Calu3 (cell line): ENCODE measurements at regions of chr7 and their contacts with region 1.

Region 1: GRCh38 chr7:137592232-137592896 is 248.8 kb upstream of the PTN start:
- DNase-seq: peak; percentile 71
- H3K4me3 Mint-ChIP-seq: no peak overlapping the region
- H3K27ac Mint-ChIP-seq: no peak overlapping the region
- H3K4me1 Mint-ChIP-seq: no peaks in the 10 kb centered on the region
- H3K27me3 Mint-ChIP-seq: no peaks in the 10 kb centered on the region
- CTCF ChIP-seq: peak; percentile 79

Region 2: GRCh38 chr7:135801045-135801693 is 1791.2 kb before region 1 on chr7:
- CTCF ChIA-PET with region 1: no interaction called
- intact Hi-C with region 1: loop called (anchors 10 kb)
- DNase-seq: peak; percentile 42
- H3K4me3 Mint-ChIP-seq: no peak overlapping the region
- H3K27ac Mint-ChIP-seq: no peak overlapping the region
- H3K4me1 Mint-ChIP-seq: peaks cover 20% of the 10 kb centered on the region
- H3K27me3 Mint-ChIP-seq: peaks cover 45% of the 10 kb centered on the region
- CTCF ChIP-seq: peak; percentile 51

Region 3: DNA sequence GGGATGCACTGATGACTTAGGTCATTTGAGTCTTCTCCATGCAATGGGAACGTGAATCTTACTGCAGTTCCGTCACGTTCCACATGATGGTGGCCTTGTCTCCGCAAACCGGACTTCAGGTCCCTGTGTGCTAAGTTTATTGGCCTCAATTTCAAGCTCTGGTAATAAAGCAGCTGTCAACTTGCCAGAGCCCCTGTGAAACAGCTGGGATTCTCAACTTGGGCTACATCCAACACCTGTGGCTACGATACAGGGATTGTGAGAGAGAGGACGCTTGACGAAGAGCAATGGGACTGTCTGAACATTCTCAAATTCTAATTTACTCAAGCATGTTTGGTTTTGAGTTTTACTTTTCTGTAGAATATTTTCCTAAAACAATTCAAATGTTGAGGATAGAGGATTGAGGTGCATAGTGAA is 423.1 kb before region 1 on chr7:
- CTCF ChIA-PET with region 1: interaction called, 4 read pairs
- intact Hi-C with region 1: loop called (anchors 1 kb)
- DNase-seq: peak; percentile 29
- H3K4me3 Mint-ChIP-seq: no peak overlapping the region
- H3K27ac Mint-ChIP-seq: no peak overlapping the region
- H3K4me1 Mint-ChIP-seq: no peaks in the 10 kb centered on the region
- H3K27me3 Mint-ChIP-seq: no peaks in the 10 kb centered on the region
- CTCF ChIP-seq: peak; percentile 14

Region 4: GRCh38 chr7:137343281-137343841 is 249.0 kb before region 1 on chr7 and contains the start of gene PTN:
- CTCF ChIA-PET with region 1: no interaction called
- intact Hi-C with region 1: loop called (anchors 10 kb)
- DNase-seq: peak; percentile 6
- H3K4me3 Mint-ChIP-seq: peak within 1 kb of the TSS; percentile 27
- H3K27ac Mint-ChIP-seq: no peak within 1 kb of the TSS
- H3K4me1 Mint-ChIP-seq: peaks cover 6% of the 10 kb centered on the region
- H3K27me3 Mint-ChIP-seq: no peaks in the 10 kb centered on the region
- CTCF ChIP-seq: no peak
- total RNA-seq, gene PTN: 0.35 and 0.54 TPM in 2 replicates

Region 5: GRCh38 chr7:137454246-137454724 is 138.1 kb before region 1 on chr7:
- CTCF ChIA-PET with region 1: no interaction called
- intact Hi-C with region 1: loop called (anchors 2 kb)
- DNase-seq: no peak
- H3K4me3 Mint-ChIP-seq: no peak overlapping the region
- H3K27ac Mint-ChIP-seq: no peak overlapping the region
- H3K4me1 Mint-ChIP-seq: no peaks in the 10 kb centered on the region
- H3K27me3 Mint-ChIP-seq: peaks cover 7% of the 10 kb centered on the region
- CTCF ChIP-seq: peak; percentile 34

Region 6: GRCh38 chr7:137469191-137469811 is 123.1 kb before region 1 on chr7:
- CTCF ChIA-PET with region 1: no interaction called
- intact Hi-C with region 1: loop called (anchors 5 kb)
- DNase-seq: no peak
- H3K4me3 Mint-ChIP-seq: no peak overlapping the region
- H3K27ac Mint-ChIP-seq: no peak overlapping the region
- H3K4me1 Mint-ChIP-seq: no peaks in the 10 kb centered on the region
- H3K27me3 Mint-ChIP-seq: no peaks in the 10 kb centered on the region
- CTCF ChIP-seq: no peak